Ovary (tissue), 10 donors: ENCODE measurements at regions of chr17 and their contacts with region 1.

Region 1: DNA sequence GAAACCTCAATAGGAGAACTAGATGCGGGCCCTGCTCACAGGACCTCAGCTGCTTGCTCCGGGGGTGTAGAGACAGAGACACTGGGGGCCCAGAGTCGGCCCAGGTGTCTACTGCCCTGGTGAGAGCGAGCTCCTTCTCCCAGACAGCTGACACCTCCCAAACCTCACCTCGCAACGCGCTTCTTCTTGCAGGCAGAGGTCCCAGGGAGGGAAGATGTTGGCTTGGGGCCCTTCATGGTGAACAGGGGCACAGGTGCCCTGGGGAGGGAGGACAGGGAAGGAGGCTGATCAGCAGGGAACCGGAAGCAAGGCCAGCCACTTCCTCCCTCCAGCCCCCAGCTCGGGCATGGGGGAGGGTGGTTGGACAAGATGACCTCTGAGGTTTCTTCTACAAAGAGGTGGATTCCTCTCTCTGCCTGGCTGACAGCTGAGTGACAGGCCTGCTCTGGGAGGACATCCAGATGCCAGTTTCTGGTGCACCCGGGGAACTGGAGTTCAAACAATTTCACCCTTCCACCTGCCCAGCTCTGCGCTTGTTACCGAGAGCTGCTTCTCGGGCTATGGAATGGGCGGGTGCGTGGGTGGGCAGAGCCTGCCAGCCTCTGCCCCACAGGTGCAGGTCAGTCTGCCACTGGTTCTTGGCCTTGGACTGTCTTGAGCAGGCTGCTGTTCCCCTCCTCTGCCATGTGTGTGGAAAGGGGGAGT is 11.7 kb upstream of the GFAP start:
- DNase-seq: peak in 1 of 5 donors; percentile 24
- H3K4me3 ChIP-seq: no peak overlapping the region
- H3K27ac ChIP-seq: no peak overlapping the region
- H3K4me1 ChIP-seq: no peaks in the 10 kb centered on the region
- H3K27me3 ChIP-seq: no peaks in the 10 kb centered on the region
- CTCF ChIP-seq: no peak
- EP300 ChIP-seq: no peak
- POLR2A ChIP-seq: no peak

Region 2: GRCh38 chr17:45021607-45022287 is 94.8 kb after region 1 on chr17:
- intact Hi-C with region 1: loop called in 2 of 4 experiments (anchors 5 kb)
- DNase-seq: peak; percentile 73 to 85 (median 79)
- H3K4me3 ChIP-seq: peak overlapping the region; percentile 30
- H3K27ac ChIP-seq: peak overlapping the region; percentile 60 to 79
- H3K4me1 ChIP-seq: peaks cover 9% of the 10 kb centered on the region
- H3K27me3 ChIP-seq: no peaks in the 10 kb centered on the region
- CTCF ChIP-seq: peak; percentile 86 to 97 (median 97)
- EP300 ChIP-seq: no peak
- POLR2A ChIP-seq: no peak